ENCODE measurements at regions of chr5 and their contacts with region 1.

Region 1: GRCh38 chr5:172044631-172045314 is 38.3 kb upstream of the FBXW11 start:
- DNase-seq: no peak
- ATAC-seq: no peak
- H3K4me3 ChIP-seq: no peak overlapping the region
- H3K27ac ChIP-seq: no peak overlapping the region
- H3K4me1 ChIP-seq: no peaks in the 10 kb centered on the region
- H3K27me3 ChIP-seq: no peaks in the 10 kb centered on the region
- CTCF ChIP-seq: no peak
- POLR2A ChIP-seq: no peak

Region 2: GRCh38 chr5:171907725-171908343 is 136.9 kb before region 1 on chr5:
- intact Hi-C with region 1: loop called (anchors 5 to 10 kb)
- DNase-seq: no peak
- ATAC-seq: peak; percentile 73 to 79 (median 79)
- H3K4me3 ChIP-seq: no peak overlapping the region
- H3K27ac ChIP-seq: no peak overlapping the region
- H3K4me1 ChIP-seq: peaks cover 0 to 5% (median 2%) of the 10 kb centered on the region in 4 donors
- H3K27me3 ChIP-seq: no peaks in the 10 kb centered on the region
- CTCF ChIP-seq: peak; percentile 73 to 85 (median 74)
- POLR2A ChIP-seq: no peak

Region 3: DNA sequence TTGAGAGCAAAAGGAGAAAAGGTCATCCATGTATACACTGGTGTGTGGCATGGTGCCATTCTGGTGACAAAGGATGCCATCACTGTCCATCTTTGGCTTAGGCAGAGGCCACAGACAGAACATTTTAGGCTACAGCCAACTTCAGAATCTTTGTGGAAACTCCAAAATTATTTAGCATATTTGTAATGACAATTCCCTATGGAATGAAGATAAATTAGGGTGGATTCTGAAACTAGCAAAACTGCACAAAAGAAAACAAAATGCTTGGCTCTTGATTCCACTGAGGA is 130.8 kb before region 1 on chr5:
- intact Hi-C with region 1: loop called (anchors 5 to 10 kb)
- DNase-seq: no peak
- ATAC-seq: peak in 3 of 4 donors; percentile 29 to 47 (median 40)
- H3K4me3 ChIP-seq: no peak overlapping the region
- H3K27ac ChIP-seq: no peak overlapping the region
- H3K4me1 ChIP-seq: peaks cover 0 to 12% (median 3%) of the 10 kb centered on the region in 4 donors
- H3K27me3 ChIP-seq: no peaks in the 10 kb centered on the region
- CTCF ChIP-seq: no peak
- POLR2A ChIP-seq: no peak

Region 4: GRCh38 chr5:172133359-172134029 is 88.7 kb after region 1 on chr5:
- intact Hi-C with region 1: no loop called
- DNase-seq: peak in 1 of 3 donors; percentile 57
- ATAC-seq: peak; percentile 65 to 78 (median 73)
- H3K4me3 ChIP-seq: no peak overlapping the region
- H3K27ac ChIP-seq: peak overlapping the region in 2 of 3 donors; percentile 12 to 37
- H3K4me1 ChIP-seq: no peaks in the 10 kb centered on the region
- H3K27me3 ChIP-seq: no peaks in the 10 kb centered on the region
- CTCF ChIP-seq: no peak
- POLR2A ChIP-seq: no peak

Measured in right lobe of liver (tissue), 6 donors.